A549 (cell line): ENCODE measurements at regions of chr9 and their contacts with region 1.

Region 1: GRCh38 chr9:15552636-15553527 is at the start of gene CCDC171:
- DNase-seq: peak; percentile 96 to 98
- ATAC-seq: peak; percentile 95 to 99
- H3K4me3 ChIP-seq: peak within 1 kb of the TSS; percentile 76
- H3K27ac ChIP-seq: peak within 1 kb of the TSS; percentile 85 to 91
- H3K4me1 ChIP-seq: 0 out of 3 replicates have a peak, but pooled peaks cover 4% of the 10 kb centered on the region
- CTCF ChIP-seq: no peak
- EP300 ChIP-seq: no peak
- POLR2A ChIP-seq: peak; percentile 97
- RAD21 ChIP-seq: no peak
- polyA plus RNA-seq, gene CCDC171: 1.3 and 1.4 TPM in 2 replicates

Region 2: GRCh38 chr9:15058236-15058635 is 494.6 kb before region 1 on chr9:
- CTCF ChIA-PET with region 1: no interaction called
- POLR2A ChIA-PET with region 1: no interaction called
- DNase-seq: no peak
- ATAC-seq: no peak
- H3K4me3 ChIP-seq: no peak overlapping the region
- H3K27ac ChIP-seq: no peak overlapping the region
- H3K4me1 ChIP-seq: no peaks in the 10 kb centered on the region
- CTCF ChIP-seq: no peak
- EP300 ChIP-seq: no peak
- POLR2A ChIP-seq: no peak
- RAD21 ChIP-seq: no peak

Region 3: DNA sequence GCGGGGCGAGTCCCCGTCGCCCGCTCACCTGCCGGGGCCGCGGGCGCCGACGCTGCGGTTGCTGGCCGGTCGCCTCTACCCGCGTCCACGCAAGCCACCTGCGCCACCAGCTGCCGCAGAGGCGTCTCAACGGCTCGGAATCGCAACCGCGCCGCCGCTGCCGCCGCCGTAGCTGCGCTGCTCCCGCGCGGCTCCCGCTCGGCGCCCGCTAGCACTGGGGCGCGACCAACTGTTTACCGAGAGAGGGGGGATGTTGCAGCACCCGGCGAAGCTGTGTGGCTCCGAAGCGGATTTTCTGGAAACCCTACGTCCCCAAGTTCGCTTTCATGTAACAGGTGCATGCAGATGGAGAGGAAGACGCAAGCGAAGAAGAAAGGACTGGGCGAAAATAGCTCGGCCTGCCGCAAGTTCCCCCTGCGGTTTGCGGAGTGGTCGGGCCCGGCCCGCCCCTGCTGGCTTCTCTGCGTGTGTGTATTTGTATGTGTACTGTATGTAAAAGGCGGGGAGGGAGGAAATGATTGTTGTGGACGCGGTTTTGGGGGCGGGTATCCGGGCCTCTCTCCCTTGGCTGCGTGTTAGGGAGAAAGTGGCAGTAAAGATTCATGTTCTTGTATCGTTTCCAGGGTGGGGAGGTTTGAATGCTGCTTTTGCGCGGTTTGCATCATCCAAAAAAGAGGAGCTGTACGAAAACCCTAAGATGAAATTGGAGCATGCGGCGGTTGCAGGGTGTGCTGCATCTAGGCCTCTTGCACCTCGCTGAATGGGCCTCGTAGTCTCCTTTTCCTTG is 41.9 kb before region 1 on chr9 and contains the start of gene PSIP1:
- CTCF ChIA-PET with region 1: interaction called, 3 read pairs
- POLR2A ChIA-PET with region 1: interaction called, 52 read pairs
- DNase-seq: peak; percentile 60 to 87
- ATAC-seq: peak; percentile 91 to 94
- H3K4me3 ChIP-seq: peak within 1 kb of the TSS; percentile 99
- H3K27ac ChIP-seq: peak within 1 kb of the TSS; percentile 98 to 99
- H3K4me1 ChIP-seq: peaks cover 22% of the 10 kb centered on the region
- CTCF ChIP-seq: no peak
- EP300 ChIP-seq: no peak
- POLR2A ChIP-seq: peak; percentile 84
- RAD21 ChIP-seq: no peak
- polyA plus RNA-seq, gene PSIP1: 62.5 and 119 TPM in 2 replicates

Region 4: GRCh38 chr9:15531380-15531779 is 21.5 kb before region 1 on chr9:
- CTCF ChIA-PET with region 1: interaction called, 3 read pairs
- POLR2A ChIA-PET with region 1: interaction called, 10 read pairs
- DNase-seq: no peak
- ATAC-seq: no peak
- H3K4me3 ChIP-seq: no peak overlapping the region
- H3K27ac ChIP-seq: no peak overlapping the region
- H3K4me1 ChIP-seq: no peaks in the 10 kb centered on the region
- CTCF ChIP-seq: no peak
- EP300 ChIP-seq: no peak
- POLR2A ChIP-seq: no peak
- RAD21 ChIP-seq: no peak

Region 5: DNA sequence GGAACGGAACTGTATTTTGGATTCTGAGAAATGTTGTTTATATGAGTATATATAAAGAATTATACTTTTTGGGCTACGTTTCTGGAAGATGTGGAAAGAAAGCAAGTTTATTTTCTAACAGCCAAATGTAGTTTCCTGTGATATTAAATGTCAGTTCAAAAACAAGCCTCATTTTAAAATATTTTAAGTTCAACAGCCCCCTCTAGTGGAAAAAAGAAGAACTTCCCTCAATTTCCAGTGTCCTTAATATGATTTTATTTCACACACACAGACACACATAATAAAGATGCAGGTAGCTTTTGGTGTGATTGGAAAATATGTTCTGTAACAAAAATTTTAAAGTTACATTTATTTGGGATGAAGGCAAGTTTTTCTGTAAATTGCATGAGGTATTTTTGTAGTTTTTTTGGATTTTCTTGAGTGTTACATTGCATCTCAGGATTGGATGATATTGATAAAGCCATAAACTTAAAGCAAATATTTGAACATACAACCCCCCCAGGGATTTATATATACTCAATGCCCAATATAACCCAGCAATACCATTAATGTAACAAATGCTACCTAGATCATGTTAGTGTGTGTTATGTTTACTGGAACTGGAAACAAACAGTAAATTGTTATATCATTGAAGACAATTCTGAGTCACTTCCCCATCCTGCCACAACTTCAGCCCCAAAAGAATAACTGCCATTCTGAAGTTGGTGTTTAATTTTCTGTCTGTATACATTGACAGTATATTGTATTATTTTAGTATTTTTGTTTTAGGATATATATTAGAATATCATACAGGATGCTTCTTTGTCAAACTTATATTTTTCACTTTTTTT is 54.0 kb after region 1 on chr9:
- CTCF ChIA-PET with region 1: interaction called, 13 read pairs
- POLR2A ChIA-PET with region 1: interaction called, 3 read pairs
- DNase-seq: peak; percentile 21 to 34
- ATAC-seq: peak in 1 of 2 experiments; percentile 46; a peak in 1 of 6 replicates
- H3K4me3 ChIP-seq: no peak overlapping the region
- H3K27ac ChIP-seq: no peak overlapping the region
- H3K4me1 ChIP-seq: no peaks in the 10 kb centered on the region
- CTCF ChIP-seq: peak; percentile 73
- EP300 ChIP-seq: no peak
- POLR2A ChIP-seq: no peak
- RAD21 ChIP-seq: peak; percentile 70 to 81